ENCODE measurements at regions of chr7 and their contacts with region 1.

Region 1: DNA sequence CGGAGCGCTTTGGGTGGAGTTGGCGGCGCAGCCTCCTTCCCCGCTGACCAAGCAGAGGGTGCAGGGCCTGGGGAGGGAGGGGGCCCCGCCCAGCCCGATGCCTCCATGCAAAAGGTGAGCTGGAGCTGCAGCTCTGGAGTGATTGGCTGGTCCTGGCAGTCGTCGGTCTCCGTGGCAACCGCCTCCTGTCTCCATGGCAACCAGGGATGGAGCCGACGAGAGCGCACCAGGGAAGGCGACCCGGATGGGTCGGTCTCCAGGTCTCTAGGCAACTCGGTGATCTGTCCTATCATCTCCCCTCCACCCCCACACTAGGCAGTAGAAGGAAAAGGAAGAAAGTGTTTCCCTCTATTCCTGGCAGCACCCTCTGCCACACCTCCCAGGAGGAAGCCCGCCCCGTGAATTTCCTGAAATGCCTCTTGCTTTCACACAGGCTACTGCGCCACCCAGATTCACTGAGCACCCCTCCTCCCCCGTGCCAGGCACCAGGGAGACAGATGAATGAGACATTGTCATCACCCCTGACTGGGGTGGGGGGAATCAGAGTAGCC is 647 bp upstream of the NACAD start:
- DNase-seq: peak in 1 of 2 experiments; percentile 47
- H3K4me3 ChIP-seq: no peak overlapping the region
- H3K27ac ChIP-seq: no peak overlapping the region
- H3K4me1 ChIP-seq: peaks cover 21% of the 10 kb centered on the region
- H3K27me3 ChIP-seq: no peaks in the 10 kb centered on the region
- CTCF ChIP-seq: no peak

Region 2: GRCh38 chr7:45048748-45049147 is 40.7 kb before region 1 on chr7:
- CTCF ChIA-PET with region 1: no interaction called
- POLR2A ChIA-PET with region 1: no interaction called
- intact Hi-C with region 1: loop called (anchors 5 kb)
- DNase-seq: peak; percentile 68 to 98
- H3K4me3 ChIP-seq: no peak overlapping the region
- H3K27ac ChIP-seq: peak overlapping the region; percentile 79
- H3K4me1 ChIP-seq: peaks cover 28% of the 10 kb centered on the region
- H3K27me3 ChIP-seq: no peaks in the 10 kb centered on the region
- CTCF ChIP-seq: no peak

Region 3: DNA sequence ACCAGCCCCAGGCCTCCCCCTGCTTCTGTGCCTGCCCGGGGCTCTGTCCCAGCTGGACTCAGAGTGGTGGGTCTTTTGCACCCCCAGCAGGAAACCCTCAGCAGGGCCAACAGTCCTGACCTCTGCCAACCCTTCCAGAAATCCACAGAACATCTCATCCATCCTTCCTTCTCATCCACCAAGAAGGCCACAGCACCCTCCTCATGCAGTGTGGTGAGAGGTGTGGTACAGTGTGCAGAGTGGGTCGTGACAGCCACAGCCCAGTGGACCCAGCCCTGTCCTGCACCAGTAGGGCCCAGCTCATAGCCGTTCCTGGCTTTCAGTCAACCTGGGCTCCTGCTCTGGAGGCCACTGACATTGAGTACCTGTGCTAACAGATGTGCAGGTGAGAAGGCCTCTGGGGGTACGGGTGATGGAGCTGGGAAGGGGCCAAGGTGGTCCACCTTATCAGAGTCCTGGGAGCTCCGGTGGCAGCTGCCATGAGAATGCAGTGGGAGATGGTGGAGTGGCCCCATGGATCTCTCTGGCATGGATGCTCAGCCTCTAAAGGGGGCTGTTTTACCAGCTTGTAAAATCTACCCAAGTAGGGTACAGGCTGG is 28.1 kb after region 1 on chr7:
- CTCF ChIA-PET with region 1: interaction called, 10 read pairs
- POLR2A ChIA-PET with region 1: no interaction called
- intact Hi-C with region 1: no loop called
- DNase-seq: no peak
- H3K4me3 ChIP-seq: no peak overlapping the region
- H3K27ac ChIP-seq: no peak overlapping the region
- H3K4me1 ChIP-seq: peaks cover 2% of the 10 kb centered on the region; the same call in 1 of the 2 replicates
- H3K27me3 ChIP-seq: peaks cover 19% of the 10 kb centered on the region
- CTCF ChIP-seq: no peak

Region 4: DNA sequence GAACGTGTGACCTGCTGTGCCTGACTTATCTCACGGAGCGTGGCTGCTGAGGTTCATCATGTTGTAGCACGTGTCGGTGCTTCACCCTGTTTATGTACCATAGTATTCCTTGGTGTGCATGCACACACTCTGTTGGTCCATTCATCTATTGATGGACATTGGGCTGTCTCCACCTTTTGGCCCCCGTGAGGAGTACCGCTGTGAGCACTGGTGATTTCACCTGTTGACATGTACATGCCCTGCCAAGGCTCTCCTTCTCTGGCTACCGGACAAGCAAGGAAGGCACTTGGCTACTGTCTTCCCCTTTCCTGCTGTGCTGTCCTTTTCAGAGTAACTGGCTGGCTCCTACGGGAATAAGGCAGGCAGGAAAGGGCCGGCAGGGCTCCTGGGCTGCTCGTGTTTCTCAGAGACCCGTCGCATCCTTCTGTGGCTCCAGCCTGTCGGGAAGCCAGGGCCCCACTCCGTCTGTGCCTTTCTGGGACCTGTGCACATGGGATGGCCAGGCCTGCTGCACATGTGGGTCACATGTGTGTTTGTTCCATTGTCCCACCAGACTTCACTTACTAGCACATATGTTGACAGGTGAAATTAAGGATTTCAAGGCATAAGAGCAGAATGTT is 39.9 kb after region 1 on chr7:
- CTCF ChIA-PET with region 1: interaction called, 13 read pairs
- POLR2A ChIA-PET with region 1: no interaction called
- intact Hi-C with region 1: no loop called
- DNase-seq: no peak
- H3K4me3 ChIP-seq: no peak overlapping the region
- H3K27ac ChIP-seq: no peak overlapping the region
- H3K4me1 ChIP-seq: no peaks in the 10 kb centered on the region
- H3K27me3 ChIP-seq: peaks cover 6% of the 10 kb centered on the region
- CTCF ChIP-seq: no peak

Measured in PC-9 (cell line).